ENCODE measurements at regions of chr22 and their contacts with region 1.

Region 1: DNA sequence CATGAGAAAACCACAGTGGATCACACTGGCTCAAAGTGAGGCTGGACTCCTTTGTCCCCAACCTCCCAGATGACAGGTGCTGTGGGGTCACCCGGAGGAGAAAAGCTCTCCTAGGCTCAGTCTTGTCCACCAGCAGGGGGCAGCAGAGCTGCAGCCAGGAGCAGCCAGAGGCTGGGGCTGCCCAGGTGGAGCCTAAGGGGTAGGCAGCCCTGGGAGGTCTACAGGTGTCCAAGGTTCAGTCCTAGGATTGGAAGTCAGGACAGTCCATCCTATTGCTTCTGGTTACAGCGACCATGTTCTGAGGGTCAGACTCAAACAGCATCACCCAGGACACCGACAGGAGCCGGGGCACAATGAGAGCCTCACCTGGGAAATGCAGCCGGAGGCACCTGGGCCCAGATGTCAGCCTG is 77.6 kb upstream of the IGLL5 start:
- H3K4me3 ChIP-seq: no peak overlapping the region
- H3K27ac ChIP-seq: no peak overlapping the region
- H3K4me1 ChIP-seq: no peaks in the 10 kb centered on the region
- CTCF ChIP-seq: 0 out of 2 replicates have a peak, but pooled peaks have one; percentile 19

Region 2: DNA sequence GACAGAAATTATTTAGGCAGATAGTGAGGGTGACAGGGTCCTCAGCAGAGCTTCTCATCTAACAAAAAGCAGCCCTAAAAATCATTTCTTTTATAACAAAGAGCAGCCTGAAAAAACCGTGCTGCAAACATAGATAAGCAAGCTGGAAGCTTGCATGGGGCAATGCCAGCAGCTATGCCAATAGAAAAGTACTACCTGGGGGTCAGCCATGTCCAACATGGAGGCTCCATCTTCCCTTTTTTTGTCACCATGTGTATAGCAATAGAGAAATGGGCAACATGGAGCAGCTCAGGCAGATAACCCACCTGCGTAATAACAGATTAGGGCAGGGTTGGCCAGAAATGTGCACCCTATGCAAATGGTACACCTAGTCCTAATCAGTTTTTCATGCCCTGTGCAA is 20.2 kb after region 1 on chr22:
- CTCF ChIA-PET with region 1: interaction called, 19 read pairs
- POLR2A ChIA-PET with region 1: no interaction called
- H3K4me3 ChIP-seq: no peak overlapping the region
- H3K27ac ChIP-seq: no peak overlapping the region
- H3K4me1 ChIP-seq: no peaks in the 10 kb centered on the region
- CTCF ChIP-seq: no peak

Region 3: GRCh38 chr22:22877523-22878210 is 67.6 kb after region 1 on chr22:
- CTCF ChIA-PET with region 1: interaction called, 29 read pairs
- POLR2A ChIA-PET with region 1: no interaction called
- H3K4me3 ChIP-seq: no peak overlapping the region
- H3K27ac ChIP-seq: no peak overlapping the region
- H3K4me1 ChIP-seq: no peaks in the 10 kb centered on the region
- CTCF ChIP-seq: peak; percentile 32; the same call in 1 of the 2 replicates